ENCODE measurements at regions of chr20 and their contacts with region 1.

Region 1: GRCh38 chr20:1894951-1895673 is at the start of gene SIRPA:
- DNase-seq: peak; percentile 77 to 84 (median 83)
- H3K4me3 ChIP-seq: peak within 1 kb of the TSS; percentile 61
- H3K27ac ChIP-seq: peak within 1 kb of the TSS; percentile 89 to 93
- H3K4me1 ChIP-seq: no peaks in the 10 kb centered on the region
- H3K27me3 ChIP-seq: no peaks in the 10 kb centered on the region
- CTCF ChIP-seq: no peak
- EP300 ChIP-seq: no peak
- POLR2A ChIP-seq: peak; percentile 46
- total RNA-seq, gene SIRPA: 20.0 to 45.6 (median 28.7) TPM

Region 2: DNA sequence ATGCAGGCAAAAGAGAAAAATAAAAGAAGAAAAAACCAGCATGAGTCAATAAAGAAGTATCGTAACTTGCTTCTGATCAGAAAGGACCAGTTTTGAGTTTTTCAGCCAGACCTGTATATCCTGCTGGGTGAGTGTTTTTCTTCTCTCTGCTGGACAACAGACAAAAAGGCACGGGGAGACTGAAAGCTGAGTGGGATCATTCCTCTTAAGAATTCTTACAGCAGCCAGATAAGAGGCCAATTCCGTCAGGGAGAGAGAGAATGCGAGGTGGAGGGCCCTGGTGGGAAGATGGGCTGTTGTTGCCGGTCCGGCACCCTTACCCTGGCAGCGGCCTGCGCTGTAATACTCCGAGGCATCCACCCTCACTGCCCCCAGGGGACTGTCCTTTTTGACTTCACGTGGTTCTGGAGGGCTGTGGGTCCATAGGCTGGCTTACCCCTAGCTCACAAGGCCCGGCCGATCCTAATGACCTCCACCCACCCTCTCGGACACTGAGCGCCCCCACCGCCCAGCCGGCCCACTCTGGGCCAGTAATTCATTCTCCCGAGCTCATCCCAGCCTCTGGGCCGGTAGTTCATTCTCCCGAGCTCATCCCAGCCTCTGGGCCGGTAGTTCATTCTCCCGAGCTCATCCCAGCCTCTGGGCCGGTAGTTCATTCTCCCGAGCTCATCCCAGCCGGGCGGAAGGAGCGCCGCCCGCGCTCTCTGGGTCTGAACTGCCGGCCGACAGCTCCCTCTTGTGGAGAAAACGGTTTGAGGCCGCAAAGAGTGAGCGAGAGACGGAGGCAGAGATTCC is 118.2 kb before region 1 on chr20:
- intact Hi-C with region 1: loop called in 1 of 4 experiments (anchors 5 kb)
- DNase-seq: peak; percentile 83 to 95 (median 88)
- H3K4me3 ChIP-seq: peak overlapping the region; percentile 49
- H3K27ac ChIP-seq: no peak overlapping the region
- H3K4me1 ChIP-seq: peaks cover 4% of the 10 kb centered on the region
- H3K27me3 ChIP-seq: no peaks in the 10 kb centered on the region
- CTCF ChIP-seq: peak; percentile 59 to 75 (median 71)
- EP300 ChIP-seq: no peak
- POLR2A ChIP-seq: no peak

Region 3: DNA sequence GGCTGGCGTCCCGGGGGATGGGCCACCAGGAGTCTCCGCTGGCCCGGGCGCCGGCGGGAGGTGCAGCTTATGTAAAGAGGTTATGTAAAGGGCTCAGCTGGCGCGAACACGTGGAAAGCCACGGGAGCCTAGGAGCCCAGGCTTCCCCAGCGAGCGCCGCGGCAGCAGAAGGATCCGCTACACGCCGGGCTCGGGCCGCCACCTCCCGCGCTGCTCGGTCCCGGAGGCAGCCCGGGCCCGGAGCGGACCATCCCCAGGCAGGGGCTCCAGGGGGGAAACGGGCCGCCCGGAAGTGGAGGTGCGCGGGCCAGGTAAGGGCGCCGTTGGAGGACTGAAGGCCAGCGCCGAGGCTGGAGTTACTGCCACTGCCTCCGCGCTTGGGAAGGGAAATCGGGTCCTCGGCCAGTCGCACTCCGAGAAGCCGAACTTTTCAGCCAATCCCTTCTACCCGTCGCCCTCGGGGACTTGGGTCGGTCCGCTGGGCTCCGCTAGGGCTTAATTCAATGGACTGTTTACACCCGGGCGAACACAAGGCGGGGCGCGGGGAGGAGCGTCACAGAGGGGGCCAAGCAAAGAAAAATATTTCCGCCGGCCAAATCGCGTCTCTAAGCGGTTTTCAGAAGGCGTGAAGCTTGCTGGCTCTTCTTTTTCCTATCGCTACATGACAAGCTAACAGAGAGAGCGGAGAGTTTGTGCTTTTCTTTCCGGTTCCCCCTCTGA is 206.9 kb after region 1 on chr20:
- intact Hi-C with region 1: loop called in 2 of 4 experiments (anchors 5 to 10 kb)
- DNase-seq: peak; percentile 90 to 94 (median 91)
- H3K4me3 ChIP-seq: peak overlapping the region; percentile 83
- H3K27ac ChIP-seq: peak overlapping the region; percentile 98 to 100
- H3K4me1 ChIP-seq: peaks cover 6% of the 10 kb centered on the region
- H3K27me3 ChIP-seq: no peaks in the 10 kb centered on the region
- CTCF ChIP-seq: peak in 1 of 3 donors; percentile 54
- EP300 ChIP-seq: no peak
- POLR2A ChIP-seq: peak; percentile 42

Measured in ovary (tissue), 10 donors.